ENCODE measurements at regions of chr11 and their contacts with region 1.

Region 1: DNA sequence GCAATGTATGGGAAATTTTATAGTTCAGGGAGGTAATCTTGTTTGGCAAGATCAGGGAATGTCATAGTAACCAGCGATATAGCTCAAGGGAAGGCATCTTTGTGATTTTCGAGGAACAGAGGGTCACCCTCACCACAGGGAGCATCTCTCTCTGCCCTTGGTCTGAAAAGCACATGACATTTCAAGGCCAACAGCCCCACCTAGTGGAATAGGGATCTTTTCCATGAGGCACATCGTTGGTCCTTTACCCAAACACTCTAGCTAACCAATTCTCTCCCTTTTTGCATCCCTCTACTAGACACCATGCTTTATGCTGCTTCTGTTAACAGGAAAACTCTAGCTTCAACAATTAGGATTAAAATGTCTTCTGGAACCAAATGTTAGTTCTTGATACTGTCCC is 179.0 kb downstream of the GRM5 start:
- DNase-seq: peak; percentile 39
- H3K4me3 ChIP-seq: no peak overlapping the region
- H3K27ac ChIP-seq: no peak overlapping the region
- H3K4me1 ChIP-seq: no peaks in the 10 kb centered on the region
- H3K27me3 ChIP-seq: no peaks in the 10 kb centered on the region
- CTCF ChIP-seq: peak; percentile 33 to 43
- POLR2A ChIP-seq: no peak

Region 2: DNA sequence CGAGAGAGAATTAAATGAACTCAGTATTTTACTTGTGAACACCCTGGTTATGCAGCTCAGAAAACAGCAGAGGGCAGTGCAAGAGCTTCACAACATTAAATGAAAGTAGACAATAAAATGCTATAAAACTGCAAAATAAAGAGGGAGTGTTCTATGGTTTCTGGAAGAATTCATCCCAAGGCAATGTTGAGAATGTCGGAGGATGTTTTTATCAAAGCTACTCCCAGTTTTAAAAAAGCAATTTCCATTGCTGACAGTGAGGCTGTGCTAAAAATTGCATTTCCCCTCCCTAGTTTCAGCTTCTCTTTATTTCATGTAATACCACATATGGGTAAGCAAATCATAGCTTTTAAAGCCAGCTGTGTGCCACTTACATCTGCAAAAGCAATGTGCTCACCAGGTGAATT is 1008.4 kb before region 1 on chr11:
- CTCF ChIA-PET with region 1: interaction called, 7 read pairs
- POLR2A ChIA-PET with region 1: no interaction called
- dilution Hi-C with region 1: no loop called
- intact Hi-C with region 1: loop called (anchors 2 kb)
- DNase-seq: peak; percentile 43
- H3K4me3 ChIP-seq: no peak overlapping the region
- H3K27ac ChIP-seq: no peak overlapping the region
- H3K4me1 ChIP-seq: no peaks in the 10 kb centered on the region
- H3K27me3 ChIP-seq: no peaks in the 10 kb centered on the region
- CTCF ChIP-seq: peak; percentile 18 to 39
- POLR2A ChIP-seq: no peak

Region 3: DNA sequence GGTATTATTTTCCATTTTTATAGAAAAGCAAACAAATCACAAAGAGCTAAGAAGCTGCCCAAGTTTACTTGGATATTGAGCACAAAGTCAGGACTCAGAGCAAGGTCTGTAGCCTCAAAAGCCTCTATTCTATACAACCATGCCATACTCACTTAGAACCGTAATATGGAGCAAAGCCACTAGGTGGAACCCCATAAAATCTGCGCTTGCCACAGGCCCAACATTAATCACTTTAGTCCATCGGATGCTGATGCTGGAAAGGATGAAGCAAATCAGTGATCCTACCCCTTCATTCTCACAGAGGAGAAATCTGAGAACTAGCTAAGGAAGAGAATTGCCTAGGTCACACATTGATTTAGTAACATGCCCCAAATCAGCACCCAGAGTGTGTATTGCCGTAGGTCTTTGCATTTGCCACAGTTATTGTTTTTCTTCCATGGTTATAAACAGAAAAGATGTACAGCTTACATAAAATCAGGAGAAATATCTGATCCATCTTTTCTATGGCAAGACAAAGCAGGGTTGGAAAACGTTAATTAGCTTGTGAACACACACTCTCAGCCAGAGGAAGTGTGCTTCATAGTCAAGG is 654.8 kb before region 1 on chr11:
- CTCF ChIA-PET with region 1: interaction called, 7 read pairs
- POLR2A ChIA-PET with region 1: no interaction called
- dilution Hi-C with region 1: no loop called
- intact Hi-C with region 1: loop called (anchors 2 kb)
- DNase-seq: peak; percentile 59
- H3K4me3 ChIP-seq: no peak overlapping the region
- H3K27ac ChIP-seq: no peak overlapping the region
- H3K4me1 ChIP-seq: no peaks in the 10 kb centered on the region
- H3K27me3 ChIP-seq: no peaks in the 10 kb centered on the region
- CTCF ChIP-seq: peak; percentile 48 to 63
- POLR2A ChIP-seq: no peak

Region 4: DNA sequence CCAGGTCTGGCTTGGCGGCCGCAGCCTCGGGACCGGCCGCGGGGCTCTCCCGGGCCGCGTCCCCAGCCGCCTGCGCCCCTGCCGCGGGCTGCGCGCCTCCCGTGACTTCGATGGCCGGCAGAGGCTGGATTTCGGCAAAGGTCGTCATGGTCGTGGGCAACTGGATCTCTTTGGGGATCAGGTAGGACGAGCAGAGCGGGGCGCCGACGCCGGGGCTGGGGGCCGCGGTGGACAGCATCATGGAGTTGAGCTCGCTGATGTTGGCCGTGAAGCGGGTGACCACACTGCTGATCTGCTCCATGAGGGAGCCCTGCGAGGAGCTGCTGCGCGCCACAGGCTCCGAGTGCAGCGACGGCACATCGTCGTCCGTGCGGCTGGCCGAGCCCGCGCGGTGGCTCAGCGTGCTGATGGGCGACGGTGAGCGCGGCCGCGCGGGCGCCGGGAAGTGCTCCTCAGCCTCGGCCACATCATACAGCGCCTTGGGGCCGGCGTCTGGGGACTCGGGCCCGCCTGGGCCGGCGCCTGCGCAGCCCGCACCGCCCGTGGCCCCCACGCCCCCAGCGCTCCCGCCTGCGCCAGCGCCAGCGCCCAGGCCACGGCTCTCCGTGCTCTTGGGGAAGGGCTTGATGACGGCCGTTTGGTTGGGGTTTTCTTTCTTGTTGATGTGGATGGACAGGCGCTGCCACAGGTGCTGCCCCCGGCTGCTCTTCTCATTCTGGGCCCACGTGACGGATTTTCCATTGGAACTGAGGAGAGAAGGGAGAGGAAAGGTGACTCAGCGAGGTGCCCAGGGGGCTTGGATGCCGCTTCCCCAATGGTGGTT is 377.8 kb before region 1 on chr11:
- CTCF ChIA-PET with region 1: no interaction called
- POLR2A ChIA-PET with region 1: no interaction called
- dilution Hi-C with region 1: no loop called
- intact Hi-C with region 1: no loop called
- DNase-seq: peak; percentile 57
- H3K4me3 ChIP-seq: peak overlapping the region in 2 of 3 experiments; percentile 6 to 47
- H3K27ac ChIP-seq: no peak overlapping the region
- H3K4me1 ChIP-seq: peaks cover 4% of the 10 kb centered on the region
- H3K27me3 ChIP-seq: no peaks in the 10 kb centered on the region
- CTCF ChIP-seq: no peak
- POLR2A ChIP-seq: no peak

Region 5: DNA sequence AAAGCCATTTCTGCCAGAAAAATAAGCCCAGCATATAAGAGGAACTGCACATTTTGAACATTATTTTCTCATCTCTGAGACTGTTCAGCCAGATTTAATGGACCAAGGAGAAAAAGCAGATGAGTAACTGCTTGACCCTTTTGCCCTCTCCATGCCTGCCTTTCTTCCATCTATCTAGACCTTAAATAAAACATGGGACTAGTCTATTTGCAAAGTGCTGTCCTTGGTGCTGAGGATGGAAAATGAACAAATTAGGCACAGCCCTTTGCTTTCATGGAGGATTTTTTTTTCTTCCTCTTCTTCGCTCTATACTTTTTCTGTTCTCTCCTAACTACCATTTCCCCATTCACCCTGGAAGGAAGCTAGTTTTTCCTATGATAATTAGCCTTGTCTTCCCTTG is 182.3 kb before region 1 on chr11:
- CTCF ChIA-PET with region 1: no interaction called
- POLR2A ChIA-PET with region 1: no interaction called
- dilution Hi-C with region 1: no loop called
- intact Hi-C with region 1: no loop called
- DNase-seq: no peak
- H3K4me3 ChIP-seq: no peak overlapping the region
- H3K27ac ChIP-seq: no peak overlapping the region
- H3K4me1 ChIP-seq: peaks cover 3% of the 10 kb centered on the region
- H3K27me3 ChIP-seq: no peaks in the 10 kb centered on the region
- CTCF ChIP-seq: no peak
- POLR2A ChIP-seq: no peak

Region 6: DNA sequence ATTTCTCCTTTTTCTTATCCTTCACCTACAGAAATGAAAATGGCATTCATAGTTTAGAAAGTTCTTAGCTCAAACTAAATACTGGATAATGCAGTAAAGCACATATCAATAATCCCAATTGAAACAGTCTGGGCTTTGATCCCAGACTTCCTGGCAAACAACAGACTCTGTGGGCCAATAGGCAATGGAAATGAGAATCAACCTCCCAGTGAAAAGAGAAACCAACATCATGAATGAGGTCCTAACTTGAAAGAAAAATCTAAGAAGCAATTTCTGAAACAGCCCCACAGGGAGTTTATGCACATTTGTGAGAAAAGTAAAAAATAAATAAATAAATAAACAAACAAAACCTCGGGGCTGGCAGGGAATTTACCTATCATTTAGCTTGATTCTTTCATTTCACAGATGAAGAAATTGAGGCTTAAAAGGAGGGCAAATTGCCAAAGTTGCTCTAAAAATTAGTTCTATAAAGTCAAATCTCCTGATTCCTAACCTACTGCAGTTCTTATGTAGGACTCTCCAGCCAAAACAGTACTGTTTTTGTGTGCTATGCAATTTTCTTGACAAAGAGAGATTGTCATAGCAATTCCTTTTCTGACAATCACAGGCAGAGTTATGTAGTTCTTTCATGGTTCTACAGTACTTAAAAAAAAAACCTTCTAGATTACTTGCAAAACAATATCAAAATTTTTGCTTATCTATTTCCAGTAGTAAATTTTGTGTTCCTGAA is 86.9 kb before region 1 on chr11:
- CTCF ChIA-PET with region 1: no interaction called
- POLR2A ChIA-PET with region 1: no interaction called
- dilution Hi-C with region 1: no loop called
- intact Hi-C with region 1: no loop called
- DNase-seq: no peak
- H3K4me3 ChIP-seq: no peak overlapping the region
- H3K27ac ChIP-seq: no peak overlapping the region
- H3K4me1 ChIP-seq: no peaks in the 10 kb centered on the region
- H3K27me3 ChIP-seq: no peaks in the 10 kb centered on the region
- CTCF ChIP-seq: no peak
- POLR2A ChIP-seq: no peak